Activated B cell treated with CpG ODN at 0.5 μM for 24 hours (primary cell): ENCODE measurements at regions of chrX and their contacts with region 1.

Region 1: GRCh38 chrX:39859991-39860861 is 237.5 kb downstream of the BCOR start:
- DNase-seq: peak; percentile 37
- ATAC-seq: peak; percentile 53
- H3K4me3 Mint-ChIP-seq: no peak overlapping the region
- H3K27ac Mint-ChIP-seq: peak overlapping the region; percentile 50
- H3K4me1 Mint-ChIP-seq: peaks cover 33% of the 10 kb centered on the region
- H3K27me3 Mint-ChIP-seq: no peaks in the 10 kb centered on the region
- CTCF ChIP-seq: no peak

Region 2: GRCh38 chrX:39619182-39620009 is 240.8 kb before region 1 on chrX:
- CTCF ChIA-PET with region 1: no interaction called
- POLR2A ChIA-PET with region 1: no interaction called
- intact Hi-C with region 1: no loop called
- DNase-seq: no peak
- ATAC-seq: no peak
- H3K4me3 Mint-ChIP-seq: no peak overlapping the region
- H3K27ac Mint-ChIP-seq: no peak overlapping the region
- H3K4me1 Mint-ChIP-seq: peaks cover 18% of the 10 kb centered on the region
- H3K27me3 Mint-ChIP-seq: peaks cover 21% of the 10 kb centered on the region
- CTCF ChIP-seq: no peak

Region 3: GRCh38 chrX:39814391-39814790 is 45.8 kb before region 1 on chrX:
- CTCF ChIA-PET with region 1: no interaction called
- POLR2A ChIA-PET with region 1: no interaction called
- intact Hi-C with region 1: loop called (anchors 1 kb)
- DNase-seq: no peak
- ATAC-seq: no peak
- H3K4me3 Mint-ChIP-seq: no peak overlapping the region
- H3K27ac Mint-ChIP-seq: no peak overlapping the region
- H3K4me1 Mint-ChIP-seq: peaks cover 8% of the 10 kb centered on the region
- H3K27me3 Mint-ChIP-seq: peaks cover 11% of the 10 kb centered on the region
- CTCF ChIP-seq: no peak

Region 4: DNA sequence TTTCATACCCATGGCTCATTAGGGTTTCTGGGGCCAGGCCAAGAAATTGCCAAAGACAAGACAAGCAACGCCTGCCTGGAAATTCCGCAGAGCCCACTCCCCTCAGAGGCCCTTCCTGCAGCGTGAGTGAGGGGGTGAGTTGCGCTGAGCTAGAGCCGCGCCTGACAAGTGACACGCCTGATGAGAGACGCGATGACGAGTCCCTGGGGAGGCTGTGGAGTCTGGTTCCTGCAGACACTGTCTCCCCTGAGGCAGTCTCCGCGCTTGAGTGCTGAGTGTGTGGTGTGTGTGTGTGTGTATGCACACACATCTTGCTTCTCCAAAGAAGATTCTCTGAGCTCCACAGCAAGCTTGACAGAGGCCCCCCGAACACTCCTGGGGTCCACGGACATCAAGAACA is 32.3 kb before region 1 on chrX:
- CTCF ChIA-PET with region 1: no interaction called
- POLR2A ChIA-PET with region 1: interaction called, 13 read pairs
- intact Hi-C with region 1: loop called (anchors 1 kb)
- DNase-seq: peak; percentile 57
- ATAC-seq: peak; percentile 100
- H3K4me3 Mint-ChIP-seq: peak overlapping the region; percentile 4
- H3K27ac Mint-ChIP-seq: no peak overlapping the region
- H3K4me1 Mint-ChIP-seq: peaks cover 29% of the 10 kb centered on the region
- H3K27me3 Mint-ChIP-seq: peaks cover 42% of the 10 kb centered on the region
- CTCF ChIP-seq: no peak

Region 5: GRCh38 chrX:39848900-39849299 is 11.3 kb before region 1 on chrX:
- CTCF ChIA-PET with region 1: no interaction called
- POLR2A ChIA-PET with region 1: no interaction called
- intact Hi-C with region 1: loop called (anchors 1 kb)
- DNase-seq: no peak
- ATAC-seq: no peak
- H3K4me3 Mint-ChIP-seq: no peak overlapping the region
- H3K27ac Mint-ChIP-seq: no peak overlapping the region
- H3K4me1 Mint-ChIP-seq: peaks cover 9% of the 10 kb centered on the region
- H3K27me3 Mint-ChIP-seq: no peaks in the 10 kb centered on the region
- CTCF ChIP-seq: no peak

Region 6: DNA sequence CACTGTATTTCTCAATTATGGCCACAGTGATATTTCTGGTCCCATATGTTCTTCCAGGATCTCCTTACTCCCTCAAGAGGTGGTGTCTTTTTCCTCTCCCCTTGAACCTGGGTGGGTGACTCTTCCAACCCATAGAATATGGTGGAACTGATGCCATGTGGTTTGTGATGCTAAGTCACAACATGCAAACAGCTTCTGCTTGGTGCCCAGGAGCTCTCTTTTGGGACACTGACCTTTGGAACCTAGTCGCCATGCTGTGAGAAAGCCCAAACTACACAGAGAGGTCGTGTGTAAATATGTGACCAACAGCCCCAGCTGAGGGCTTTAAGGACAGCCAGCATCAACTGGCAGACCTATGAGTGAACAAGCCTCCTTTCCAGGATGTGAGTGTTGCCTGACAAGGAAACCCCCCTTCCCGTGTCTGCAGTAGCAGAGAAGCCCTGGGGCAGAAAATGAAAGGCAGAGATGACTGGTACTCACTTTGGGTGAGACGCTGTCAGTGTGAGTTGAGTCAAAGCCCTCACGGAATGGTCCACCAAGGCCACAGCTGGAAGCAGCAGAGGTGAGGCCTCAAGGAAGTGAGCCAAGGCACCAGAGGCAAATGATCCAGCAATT is 14.1 kb after region 1 on chrX:
- CTCF ChIA-PET with region 1: no interaction called
- POLR2A ChIA-PET with region 1: interaction called, 3 read pairs
- intact Hi-C with region 1: loop called (anchors 1 kb)
- DNase-seq: no peak
- ATAC-seq: peak; percentile 74
- H3K4me3 Mint-ChIP-seq: no peak overlapping the region
- H3K27ac Mint-ChIP-seq: no peak overlapping the region
- H3K4me1 Mint-ChIP-seq: peaks cover 3% of the 10 kb centered on the region
- H3K27me3 Mint-ChIP-seq: no peaks in the 10 kb centered on the region
- CTCF ChIP-seq: no peak

Region 7: GRCh38 chrX:39910651-39911050 is 50.4 kb after region 1 on chrX:
- CTCF ChIA-PET with region 1: no interaction called
- POLR2A ChIA-PET with region 1: no interaction called
- intact Hi-C with region 1: no loop called
- DNase-seq: no peak
- ATAC-seq: no peak
- H3K4me3 Mint-ChIP-seq: no peak overlapping the region
- H3K27ac Mint-ChIP-seq: no peak overlapping the region
- H3K4me1 Mint-ChIP-seq: peaks cover 2% of the 10 kb centered on the region
- H3K27me3 Mint-ChIP-seq: no peaks in the 10 kb centered on the region
- CTCF ChIP-seq: no peak

Region 8: DNA sequence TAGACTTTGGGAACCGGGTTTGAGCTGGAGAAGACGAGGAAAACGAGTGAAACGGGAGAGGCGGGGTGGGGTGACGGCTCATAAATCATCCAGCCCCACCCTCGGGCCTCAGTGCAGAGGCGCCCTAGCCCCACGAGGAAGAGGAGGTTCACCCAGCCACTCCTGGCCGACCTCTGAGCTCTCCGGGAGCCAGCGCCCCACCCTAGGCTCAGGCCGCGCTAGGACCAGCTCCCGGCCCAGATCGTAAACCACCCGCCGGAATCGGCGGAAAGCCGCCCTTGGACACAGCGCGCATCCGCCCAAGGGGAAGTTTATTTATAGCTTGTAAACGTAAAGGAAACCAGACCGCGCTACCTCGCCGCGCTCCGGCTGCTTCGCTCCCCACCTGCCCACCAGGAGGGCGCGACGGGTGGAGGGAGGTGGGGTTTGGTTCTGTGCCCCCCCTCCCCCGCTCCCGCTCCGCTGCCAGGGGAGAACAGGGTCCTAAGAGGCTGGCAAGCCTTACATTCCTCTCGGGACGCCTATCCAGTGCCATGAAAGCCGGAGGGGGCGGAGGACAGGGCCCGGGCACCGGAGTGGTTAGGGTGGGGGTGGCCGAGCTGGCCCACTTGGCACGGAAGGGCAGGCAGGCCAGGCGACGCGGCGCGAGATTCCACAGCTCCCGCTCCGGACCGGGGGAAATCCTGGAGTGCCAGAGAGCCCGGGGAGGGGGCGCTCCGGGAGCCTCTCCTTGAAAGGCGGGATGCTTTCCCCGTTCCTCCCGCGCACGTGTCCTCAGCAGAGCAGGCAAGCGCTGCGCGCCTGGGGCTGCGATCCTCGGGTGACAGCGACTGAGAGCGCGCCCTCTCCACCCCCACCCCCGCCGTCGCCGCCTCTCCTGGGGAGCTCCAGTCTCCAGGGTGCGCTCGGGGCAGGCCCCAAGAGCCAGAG is 153.3 kb after region 1 on chrX:
- CTCF ChIA-PET with region 1: no interaction called
- POLR2A ChIA-PET with region 1: interaction called, 11 read pairs
- intact Hi-C with region 1: loop called (anchors 1 kb)
- DNase-seq: peak; percentile 41
- ATAC-seq: peak; percentile 47
- H3K4me3 Mint-ChIP-seq: peak overlapping the region; percentile 76
- H3K27ac Mint-ChIP-seq: peak overlapping the region; percentile 56
- H3K4me1 Mint-ChIP-seq: peaks cover 26% of the 10 kb centered on the region
- H3K27me3 Mint-ChIP-seq: no peaks in the 10 kb centered on the region
- CTCF ChIP-seq: no peak

Region 9: DNA sequence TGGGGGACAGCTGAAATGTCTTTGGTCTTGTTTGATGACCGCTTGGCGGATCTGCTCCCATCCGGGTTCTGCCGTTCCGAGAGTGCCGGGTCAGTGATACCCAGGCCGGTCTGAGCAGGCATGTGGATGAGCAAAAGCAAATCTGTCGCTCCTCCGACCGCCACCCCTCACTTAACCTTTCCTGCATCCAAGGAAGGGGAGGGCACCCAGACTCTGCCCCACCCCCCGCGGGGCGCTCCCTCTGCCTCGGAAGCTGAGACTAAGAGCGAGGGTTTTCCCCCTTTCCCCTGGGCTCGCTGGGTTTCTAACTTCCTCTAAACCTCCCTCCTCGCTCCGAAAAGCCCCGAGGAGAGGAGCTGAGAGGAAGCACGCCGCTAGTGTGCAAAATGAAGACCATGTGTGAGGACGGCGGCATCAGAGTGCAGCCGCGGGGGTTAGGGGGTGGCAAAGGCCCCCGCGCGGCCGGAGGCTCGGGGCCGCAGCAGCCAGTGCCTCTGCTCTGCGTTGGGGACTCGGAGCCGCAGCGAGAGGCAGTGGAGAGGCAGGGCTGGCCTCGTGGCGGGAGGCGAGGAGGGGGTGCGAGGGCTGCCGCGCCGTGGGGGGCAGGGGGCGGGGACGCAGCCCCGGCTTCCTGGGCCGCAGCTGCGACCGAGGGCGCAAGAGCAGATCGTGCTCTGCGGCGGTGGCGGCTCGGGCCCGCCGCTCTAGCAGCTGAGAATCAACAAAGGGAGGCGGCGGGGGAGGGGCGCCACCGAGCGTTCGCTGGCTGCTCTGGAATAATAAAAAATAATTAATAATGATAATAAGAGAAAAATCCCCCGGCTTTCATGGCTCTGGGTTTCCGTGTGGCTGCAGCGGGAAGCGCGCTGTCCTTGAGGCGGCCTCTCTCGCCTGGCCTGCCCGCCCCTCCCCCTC is 293.4 kb after region 1 on chrX:
- CTCF ChIA-PET with region 1: no interaction called
- POLR2A ChIA-PET with region 1: interaction called, 7 read pairs
- intact Hi-C with region 1: loop called (anchors 2 kb)
- DNase-seq: peak; percentile 57
- ATAC-seq: peak; percentile 76
- H3K4me3 Mint-ChIP-seq: peak overlapping the region; percentile 80
- H3K27ac Mint-ChIP-seq: peak overlapping the region; percentile 77
- H3K4me1 Mint-ChIP-seq: peaks cover 38% of the 10 kb centered on the region
- H3K27me3 Mint-ChIP-seq: no peaks in the 10 kb centered on the region
- CTCF ChIP-seq: no peak